ENCODE measurements at regions of chr6 and their contacts with region 1.

Region 1: DNA sequence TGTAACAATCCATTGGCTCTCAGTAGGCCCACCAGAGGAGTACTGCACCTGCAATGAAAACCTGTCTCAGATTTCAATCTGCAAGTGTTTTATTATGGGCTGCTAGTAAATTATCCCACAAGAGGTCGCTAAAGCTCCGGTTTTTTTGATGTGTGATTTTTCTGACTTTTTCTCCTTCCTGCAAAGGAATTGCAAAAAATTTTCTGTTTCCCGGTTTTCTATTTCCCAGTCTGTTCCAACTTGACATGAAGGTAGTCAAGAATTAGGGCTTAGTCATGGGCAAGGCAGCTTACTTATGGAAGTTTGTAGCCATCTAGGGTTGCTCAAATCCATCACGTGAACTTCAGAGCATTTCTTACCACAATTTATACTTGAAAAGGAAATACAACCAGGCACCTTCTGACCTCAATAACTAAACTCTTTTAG is 38.5 kb upstream of the AHI1 start:
- DNase-seq: peak; percentile 82
- H3K4me3 Mint-ChIP-seq: peak overlapping the region; percentile 66
- H3K27ac Mint-ChIP-seq: peak overlapping the region; percentile 81
- H3K4me1 Mint-ChIP-seq: peaks cover 36% of the 10 kb centered on the region
- H3K27me3 Mint-ChIP-seq: no peaks in the 10 kb centered on the region

Region 2: GRCh38 chr6:135105710-135106109 is 430.3 kb before region 1 on chr6:
- intact Hi-C with region 1: no loop called
- DNase-seq: no peak
- H3K4me3 Mint-ChIP-seq: no peak overlapping the region
- H3K27ac Mint-ChIP-seq: no peak overlapping the region
- H3K4me1 Mint-ChIP-seq: peaks cover 41% of the 10 kb centered on the region
- H3K27me3 Mint-ChIP-seq: no peaks in the 10 kb centered on the region

Region 3: DNA sequence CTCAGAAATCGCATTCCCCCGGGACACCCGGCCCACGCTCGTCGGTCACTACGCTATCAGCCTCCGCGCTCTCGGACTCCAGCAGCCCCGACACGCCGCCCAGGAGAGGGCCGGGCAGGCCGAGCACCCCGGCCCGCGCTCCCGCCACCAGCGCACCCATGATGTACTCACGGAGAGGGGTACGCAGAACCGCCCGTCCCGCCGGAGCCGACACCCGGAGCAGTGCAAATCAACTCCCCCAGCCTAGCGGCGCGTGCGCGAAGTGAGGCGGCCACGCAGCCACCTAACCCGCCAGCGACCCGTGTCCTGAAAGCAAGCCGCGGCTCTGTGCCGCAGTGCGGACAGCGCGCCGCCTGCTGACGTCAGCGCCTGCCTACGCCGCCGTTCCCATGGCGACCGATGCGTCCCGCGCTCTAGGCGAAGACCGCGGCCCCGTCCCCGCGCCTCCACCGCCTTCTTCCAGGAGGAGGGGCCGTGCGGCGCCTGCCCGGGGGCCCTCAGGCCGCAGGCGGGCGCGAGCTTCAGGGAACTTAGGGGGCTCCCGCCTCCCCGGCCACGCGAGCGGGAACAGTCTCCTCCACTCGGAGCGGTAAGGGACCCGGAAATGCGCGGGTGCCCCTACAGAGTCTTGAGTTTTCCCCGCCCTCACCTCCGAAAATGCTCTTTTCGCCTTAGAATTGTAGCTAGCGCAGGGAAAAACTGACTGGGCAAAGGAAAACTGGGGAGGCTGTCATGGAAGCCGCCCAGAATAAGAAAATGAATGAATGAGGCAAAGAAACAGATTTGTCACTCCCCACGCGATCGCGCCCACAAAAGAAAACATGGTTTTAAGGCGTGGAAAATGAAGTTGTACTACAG is 38.4 kb before region 1 on chr6 and contains the start of gene AHI1:
- intact Hi-C with region 1: loop called (anchors 1 kb)
- DNase-seq: peak; percentile 97
- H3K4me3 Mint-ChIP-seq: no peak within 1 kb of the TSS
- H3K27ac Mint-ChIP-seq: no peak within 1 kb of the TSS
- H3K4me1 Mint-ChIP-seq: peaks cover 18% of the 10 kb centered on the region
- H3K27me3 Mint-ChIP-seq: no peaks in the 10 kb centered on the region
- total RNA-seq, gene AHI1: 155 and 160 TPM in 2 replicates

Region 4: DNA sequence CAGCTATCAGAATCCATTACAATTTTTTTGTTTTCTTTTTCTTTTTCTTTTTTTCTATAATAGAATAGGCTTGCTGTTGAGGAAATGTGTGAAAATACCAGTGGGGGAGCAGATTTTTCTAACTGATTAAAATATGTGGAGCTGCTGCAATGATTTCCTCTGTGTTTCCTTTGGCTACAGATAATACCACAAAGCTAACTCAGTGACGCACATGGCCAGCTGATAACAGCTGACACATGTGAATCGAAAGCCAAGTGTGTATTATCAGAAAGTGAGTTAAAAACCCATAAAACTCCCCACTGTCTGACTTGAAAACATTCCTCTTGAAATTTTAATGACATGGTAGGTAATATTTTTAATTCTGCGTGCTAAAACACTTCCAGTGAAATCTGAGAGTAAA is 32.4 kb after region 1 on chr6:
- intact Hi-C with region 1: loop called (anchors 1 kb)
- DNase-seq: peak; percentile 90
- H3K4me3 Mint-ChIP-seq: peak overlapping the region; percentile 64
- H3K27ac Mint-ChIP-seq: peak overlapping the region; percentile 92
- H3K4me1 Mint-ChIP-seq: peaks cover 62% of the 10 kb centered on the region
- H3K27me3 Mint-ChIP-seq: no peaks in the 10 kb centered on the region

Region 5: GRCh38 chr6:135604035-135604860 is 68.2 kb after region 1 on chr6:
- intact Hi-C with region 1: loop called (anchors 1 kb)
- DNase-seq: peak; percentile 56
- H3K4me3 Mint-ChIP-seq: no peak overlapping the region
- H3K27ac Mint-ChIP-seq: peak overlapping the region; percentile 90
- H3K4me1 Mint-ChIP-seq: peaks cover 31% of the 10 kb centered on the region
- H3K27me3 Mint-ChIP-seq: no peaks in the 10 kb centered on the region

Region 6: GRCh38 chr6:135675862-135676261 is 139.9 kb after region 1 on chr6:
- intact Hi-C with region 1: loop called (anchors 1 kb)
- DNase-seq: peak; percentile 85
- H3K4me3 Mint-ChIP-seq: peak overlapping the region; percentile 32
- H3K27ac Mint-ChIP-seq: peak overlapping the region; percentile 74
- H3K4me1 Mint-ChIP-seq: peaks cover 39% of the 10 kb centered on the region
- H3K27me3 Mint-ChIP-seq: no peaks in the 10 kb centered on the region

Region 7: GRCh38 chr6:136226027-136226673 is 690.1 kb after region 1 on chr6:
- intact Hi-C with region 1: loop called (anchors 1 kb)
- DNase-seq: peak; percentile 89
- H3K4me3 Mint-ChIP-seq: peak overlapping the region; percentile 25
- H3K27ac Mint-ChIP-seq: peak overlapping the region; percentile 44
- H3K4me1 Mint-ChIP-seq: peaks cover 22% of the 10 kb centered on the region
- H3K27me3 Mint-ChIP-seq: no peaks in the 10 kb centered on the region